HepG2 (cell line): ENCODE measurements at regions of chr12 and their contacts with region 1.

Region 1: GRCh38 chr12:113348849-113349536 is 9.4 kb upstream of the PLBD2 start:
- DNase-seq: no peak
- ATAC-seq: peak; percentile 43
- H3K4me3 ChIP-seq: no peak overlapping the region; a peak in 1 of 6 replicates
- H3K27ac ChIP-seq: no peak overlapping the region
- H3K4me1 ChIP-seq: 0 out of 2 replicates have a peak, but pooled peaks cover 13% of the 10 kb centered on the region
- H3K27me3 ChIP-seq: peaks cover 6 to 16% of the 10 kb centered on the region in 2 experiments; a peak in 4 of 5 replicates
- CTCF ChIP-seq: no peak
- EP300 ChIP-seq: no peak
- POLR2A ChIP-seq: no peak
- RAD21 ChIP-seq: no peak

Region 2: GRCh38 chr12:113174461-113175384 is 174.3 kb before region 1 on chr12:
- CTCF ChIA-PET with region 1: no interaction called
- POLR2A ChIA-PET with region 1: no interaction called
- in situ Hi-C with region 1: no loop called
- intact Hi-C with region 1: no loop called
- DNase-seq: peak; percentile 33
- ATAC-seq: peak; percentile 87
- H3K4me3 ChIP-seq: no peak overlapping the region
- H3K27ac ChIP-seq: no peak overlapping the region
- H3K4me1 ChIP-seq: no peaks in the 10 kb centered on the region
- H3K27me3 ChIP-seq: no peaks in the 10 kb centered on the region
- CTCF ChIP-seq: peak; percentile 88
- EP300 ChIP-seq: no peak
- POLR2A ChIP-seq: no peak
- RAD21 ChIP-seq: 0 out of 2 replicates have a peak, but pooled peaks have one; percentile 37

Region 3: GRCh38 chr12:113334786-113335540 is 14.0 kb before region 1 on chr12 and contains the start of gene SLC8B1:
- CTCF ChIA-PET with region 1: no interaction called
- POLR2A ChIA-PET with region 1: interaction called, 10 read pairs
- in situ Hi-C with region 1: no loop called
- intact Hi-C with region 1: no loop called
- DNase-seq: peak; percentile 64
- ATAC-seq: peak; percentile 98
- H3K4me3 ChIP-seq: peak within 1 kb of the TSS; percentile 46 to 71 (median 55)
- H3K27ac ChIP-seq: no peak within 1 kb of the TSS
- H3K4me1 ChIP-seq: peaks cover 22% of the 10 kb centered on the region
- H3K27me3 ChIP-seq: 0 out of 5 replicates have a peak, but pooled peaks cover 0 to 1% of the 10 kb centered on the region in 2 experiments
- CTCF ChIP-seq: no peak
- EP300 ChIP-seq: no peak
- POLR2A ChIP-seq: peak; percentile 60 to 89; a peak in 3 of 4 replicates
- RAD21 ChIP-seq: peak; percentile 33; the same call in 1 of the 2 replicates
- total RNA-seq, gene SLC8B1: 3.3 and 6.8 TPM in 2 replicates

Region 4: DNA sequence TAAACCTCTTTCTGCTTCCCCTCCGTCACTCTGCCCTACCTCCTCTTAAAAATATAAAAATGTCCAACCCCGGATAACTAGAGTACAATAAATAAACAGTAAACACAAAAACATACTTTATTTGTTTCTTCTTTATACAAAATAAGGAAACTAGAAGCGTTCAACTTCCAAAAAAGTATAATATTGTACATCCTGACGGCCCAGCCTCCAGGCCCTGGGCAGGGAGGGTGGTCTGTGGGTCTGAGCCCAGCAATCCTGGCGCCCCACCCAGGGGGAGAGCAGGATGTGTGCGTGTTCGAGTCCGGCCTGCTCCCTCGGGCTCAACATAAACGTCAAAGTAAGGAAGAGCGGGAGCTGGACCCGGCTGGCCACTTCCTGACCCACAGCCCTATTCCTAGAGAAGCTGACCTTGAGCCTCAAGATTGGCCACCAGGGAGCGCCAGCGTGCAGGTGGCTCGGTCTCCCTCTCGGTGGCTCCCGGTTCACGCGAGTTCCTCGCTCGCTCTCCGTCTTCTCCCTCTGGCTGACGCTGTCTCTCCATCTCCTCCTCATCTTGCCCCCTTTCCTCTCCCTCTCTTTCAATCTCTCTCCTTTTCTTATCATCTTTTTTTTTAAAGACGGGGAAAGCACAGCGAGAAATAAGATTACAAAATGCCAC is 113.3 kb after region 1 on chr12:
- CTCF ChIA-PET with region 1: no interaction called
- POLR2A ChIA-PET with region 1: no interaction called
- in situ Hi-C with region 1: no loop called
- intact Hi-C with region 1: no loop called
- DNase-seq: peak; percentile 44
- ATAC-seq: peak; percentile 81
- H3K4me3 ChIP-seq: peak overlapping the region in 1 of 3 experiments; percentile 7; a peak in 1 of 6 replicates
- H3K27ac ChIP-seq: no peak overlapping the region
- H3K4me1 ChIP-seq: no peaks in the 10 kb centered on the region
- H3K27me3 ChIP-seq: peaks cover 11 to 45% of the 10 kb centered on the region in 2 experiments
- CTCF ChIP-seq: peak; percentile 88
- EP300 ChIP-seq: no peak
- POLR2A ChIP-seq: no peak
- RAD21 ChIP-seq: peak; percentile 58